ENCODE measurements at regions of chr13 and their contacts with region 1.

Region 1: GRCh38 chr13:74133657-74134201 is 475 bp downstream of the KLF12 start:
- DNase-seq: peak; percentile 87
- H3K4me3 Mint-ChIP-seq: peak overlapping the region; percentile 91
- H3K27ac Mint-ChIP-seq: peak overlapping the region; percentile 96
- H3K4me1 Mint-ChIP-seq: peaks cover 33% of the 10 kb centered on the region
- H3K27me3 Mint-ChIP-seq: no peaks in the 10 kb centered on the region

Region 2: GRCh38 chr13:73765651-73766384 is 367.9 kb before region 1 on chr13:
- CTCF ChIA-PET with region 1: interaction called, 3 read pairs
- intact Hi-C with region 1: loop called (anchors 1 kb)
- DNase-seq: peak; percentile 95
- H3K4me3 Mint-ChIP-seq: peak overlapping the region; percentile 70
- H3K27ac Mint-ChIP-seq: peak overlapping the region; percentile 92
- H3K4me1 Mint-ChIP-seq: peaks cover 64% of the 10 kb centered on the region
- H3K27me3 Mint-ChIP-seq: no peaks in the 10 kb centered on the region

Region 3: GRCh38 chr13:73984949-73985691 is 148.6 kb before region 1 on chr13:
- CTCF ChIA-PET with region 1: interaction called, 3 read pairs
- intact Hi-C with region 1: loop called (anchors 1 kb)
- DNase-seq: peak; percentile 95
- H3K4me3 Mint-ChIP-seq: peak overlapping the region; percentile 73
- H3K27ac Mint-ChIP-seq: peak overlapping the region; percentile 96
- H3K4me1 Mint-ChIP-seq: peaks cover 39% of the 10 kb centered on the region
- H3K27me3 Mint-ChIP-seq: no peaks in the 10 kb centered on the region

Region 4: DNA sequence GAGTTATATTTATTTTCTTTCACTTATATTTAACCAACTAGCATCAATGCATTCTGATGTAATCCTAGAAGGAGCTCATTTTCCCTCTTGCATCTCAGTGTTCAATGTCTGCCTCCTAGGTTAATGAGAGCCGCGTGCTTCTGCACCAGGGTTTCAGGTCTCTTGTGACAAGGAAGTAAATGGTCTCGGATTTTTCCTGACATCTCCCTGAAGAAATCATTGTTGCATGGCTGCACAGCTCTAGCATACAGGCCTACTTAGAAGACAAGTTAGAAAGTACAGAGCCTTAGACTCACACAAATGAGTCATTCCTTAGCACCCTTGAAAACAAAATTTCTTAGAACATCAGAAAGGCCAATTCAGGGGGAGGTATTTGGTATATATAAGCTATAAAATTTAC is 57.7 kb after region 1 on chr13:
- CTCF ChIA-PET with region 1: no interaction called
- intact Hi-C with region 1: loop called (anchors 1 kb)
- DNase-seq: no peak
- H3K4me3 Mint-ChIP-seq: no peak overlapping the region
- H3K27ac Mint-ChIP-seq: peak overlapping the region; percentile 50
- H3K4me1 Mint-ChIP-seq: peaks cover 38% of the 10 kb centered on the region
- H3K27me3 Mint-ChIP-seq: no peaks in the 10 kb centered on the region

Region 5: GRCh38 chr13:74575729-74576125 is 442.0 kb after region 1 on chr13:
- CTCF ChIA-PET with region 1: no interaction called
- intact Hi-C with region 1: loop called (anchors 10 kb)
- DNase-seq: peak; percentile 77
- H3K4me3 Mint-ChIP-seq: peak overlapping the region; percentile 69
- H3K27ac Mint-ChIP-seq: no peak overlapping the region
- H3K4me1 Mint-ChIP-seq: peaks cover 10% of the 10 kb centered on the region
- H3K27me3 Mint-ChIP-seq: peaks cover 20% of the 10 kb centered on the region

Region 6: DNA sequence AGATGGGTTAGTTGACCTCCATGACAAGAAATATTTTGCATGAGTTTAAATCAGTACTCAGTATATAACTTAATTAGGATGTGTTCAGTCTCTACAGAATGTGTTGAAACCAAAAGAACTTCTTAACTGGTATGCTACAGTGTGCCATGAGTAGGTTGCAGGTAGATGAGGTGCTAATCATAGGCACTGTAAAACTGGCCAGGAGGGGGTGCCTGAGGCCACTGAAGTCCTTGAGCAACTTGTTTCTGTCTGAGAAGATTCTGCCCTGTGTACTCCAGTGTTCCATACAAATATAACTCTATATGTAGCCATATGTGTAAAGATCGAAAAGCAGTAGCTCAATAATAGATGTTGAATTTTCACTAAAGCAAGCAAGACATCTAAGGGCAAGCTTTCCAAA is 549.7 kb after region 1 on chr13:
- CTCF ChIA-PET with region 1: no interaction called
- intact Hi-C with region 1: no loop called
- DNase-seq: no peak
- H3K4me3 Mint-ChIP-seq: no peak overlapping the region
- H3K27ac Mint-ChIP-seq: no peak overlapping the region
- H3K4me1 Mint-ChIP-seq: no peaks in the 10 kb centered on the region
- H3K27me3 Mint-ChIP-seq: peaks cover 3% of the 10 kb centered on the region